Heart left ventricle (tissue), 16 donors: ENCODE measurements at regions of chr9 and their contacts with region 1.

Region 1: GRCh38 chr9:128361986-128362646 is 9.1 kb upstream of the URM1 start:
- DNase-seq: peak; percentile 83 to 89 (median 85)
- ATAC-seq: peak; percentile 81 to 93 (median 90)
- H3K4me3 ChIP-seq: peak overlapping the region in 11 of 12 donors; percentile 18 to 65 (median 50)
- H3K27ac ChIP-seq: peak overlapping the region; percentile 1 to 75 (median 58)
- H3K4me1 ChIP-seq: peaks cover 0 to 29% (median 22%) of the 10 kb centered on the region in 12 donors
- H3K27me3 ChIP-seq: no peaks in the 10 kb centered on the region
- CTCF ChIP-seq: peak; percentile 86 to 98 (median 90)
- POLR2A ChIP-seq: peak in 1 of 2 donors; percentile 29

Region 2: DNA sequence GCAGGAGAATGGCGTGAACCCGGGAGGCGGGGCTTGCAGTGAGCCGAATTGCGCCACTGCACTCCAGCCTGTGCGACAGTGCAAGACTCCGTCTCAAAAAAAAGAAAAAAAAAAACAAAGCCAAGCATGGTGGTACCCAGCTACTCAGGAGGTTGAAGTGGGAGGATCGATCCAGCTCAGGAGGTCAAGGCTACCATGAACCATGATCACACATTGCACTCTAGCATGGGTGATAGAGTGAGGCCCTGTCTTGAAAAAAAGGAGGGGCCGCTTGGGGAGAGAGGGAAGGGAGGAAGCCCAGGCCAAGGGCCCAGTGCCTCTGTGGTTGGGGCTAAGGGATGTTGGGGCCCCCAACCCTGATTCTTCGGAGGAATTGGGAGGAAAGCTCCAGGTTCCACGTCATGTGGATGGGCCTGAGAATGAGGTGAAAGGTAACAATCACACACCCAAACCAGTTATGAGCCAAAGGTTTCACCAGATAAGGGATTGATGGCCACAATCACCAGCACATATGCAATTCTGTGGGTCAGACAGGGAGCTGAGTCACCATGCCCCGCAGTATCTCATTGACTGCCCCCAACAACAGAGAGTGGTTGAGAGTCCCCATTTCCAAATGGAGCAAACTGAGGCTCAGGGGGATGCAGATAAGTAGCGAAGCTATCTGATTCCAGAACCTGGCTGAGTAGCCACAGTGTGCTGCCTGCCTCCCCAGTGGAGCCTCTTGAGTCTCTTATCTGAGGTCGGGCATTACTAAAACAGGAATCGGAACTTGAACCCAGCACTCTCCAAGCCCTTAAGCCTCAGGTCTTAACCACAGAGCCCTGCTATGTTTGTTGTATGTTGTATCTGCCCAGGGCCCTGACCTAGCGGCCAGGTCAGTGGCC is 65.5 kb before region 1 on chr9:
- intact Hi-C with region 1: loop called in 2 of 10 experiments (anchors 2 to 5 kb)
- DNase-seq: no peak
- ATAC-seq: no peak
- H3K4me3 ChIP-seq: no peak overlapping the region
- H3K27ac ChIP-seq: no peak overlapping the region
- H3K4me1 ChIP-seq: peaks cover 0 to 6% (median 0%) of the 10 kb centered on the region in 12 donors
- H3K27me3 ChIP-seq: no peaks in the 10 kb centered on the region
- CTCF ChIP-seq: no peak
- POLR2A ChIP-seq: no peak

Region 3: GRCh38 chr9:128412120-128412790 is 50.1 kb after region 1 on chr9:
- intact Hi-C with region 1: loop called in 9 of 10 experiments (anchors 1 to 5 kb)
- DNase-seq: peak in 2 of 5 donors; percentile 26 to 35
- ATAC-seq: peak in 3 of 4 donors; percentile 28 to 65 (median 49)
- H3K4me3 ChIP-seq: no peak overlapping the region
- H3K27ac ChIP-seq: no peak overlapping the region
- H3K4me1 ChIP-seq: peaks cover 0 to 13% (median 0%) of the 10 kb centered on the region in 12 donors
- H3K27me3 ChIP-seq: peaks cover 0 to 60% (median 15%) of the 10 kb centered on the region in 9 donors
- CTCF ChIP-seq: peak; percentile 33 to 68 (median 57)
- POLR2A ChIP-seq: no peak

Region 4: GRCh38 chr9:128420060-128420650 is 58.0 kb after region 1 on chr9:
- intact Hi-C with region 1: loop called in 2 of 10 experiments (anchors 2 to 5 kb)
- DNase-seq: peak; percentile 74 to 87 (median 79)
- ATAC-seq: peak; percentile 66 to 90 (median 87)
- H3K4me3 ChIP-seq: peak overlapping the region; percentile 56 to 99 (median 93)
- H3K27ac ChIP-seq: peak overlapping the region in 11 of 12 donors; percentile 64 to 87 (median 78)
- H3K4me1 ChIP-seq: peaks cover 0 to 28% (median 16%) of the 10 kb centered on the region in 12 donors
- H3K27me3 ChIP-seq: peaks cover 0 to 32% (median 13%) of the 10 kb centered on the region in 9 donors
- CTCF ChIP-seq: peak; percentile 78 to 98 (median 86)
- POLR2A ChIP-seq: peak in 1 of 2 donors; percentile 11

Region 5: GRCh38 chr9:128504485-128505413 is 142.6 kb after region 1 on chr9 and contains the start of gene GLE1:
- intact Hi-C with region 1: loop called in 1 of 10 experiments (anchors 10 kb)
- DNase-seq: peak; percentile 95 to 99 (median 96)
- ATAC-seq: peak; percentile 99 to 100 (median 100)
- H3K4me3 ChIP-seq: peak within 1 kb of the TSS; percentile 45 to 99 (median 78)
- H3K27ac ChIP-seq: peak within 1 kb of the TSS; percentile 20 to 90 (median 80)
- H3K4me1 ChIP-seq: peaks cover 0 to 24% (median 19%) of the 10 kb centered on the region in 12 donors
- H3K27me3 ChIP-seq: no peaks in the 10 kb centered on the region
- CTCF ChIP-seq: no peak
- POLR2A ChIP-seq: peak in 1 of 2 donors; percentile 80
- total RNA-seq, gene GLE1: 17.2 to 23.5 (median 19.9) TPM

Region 6: DNA sequence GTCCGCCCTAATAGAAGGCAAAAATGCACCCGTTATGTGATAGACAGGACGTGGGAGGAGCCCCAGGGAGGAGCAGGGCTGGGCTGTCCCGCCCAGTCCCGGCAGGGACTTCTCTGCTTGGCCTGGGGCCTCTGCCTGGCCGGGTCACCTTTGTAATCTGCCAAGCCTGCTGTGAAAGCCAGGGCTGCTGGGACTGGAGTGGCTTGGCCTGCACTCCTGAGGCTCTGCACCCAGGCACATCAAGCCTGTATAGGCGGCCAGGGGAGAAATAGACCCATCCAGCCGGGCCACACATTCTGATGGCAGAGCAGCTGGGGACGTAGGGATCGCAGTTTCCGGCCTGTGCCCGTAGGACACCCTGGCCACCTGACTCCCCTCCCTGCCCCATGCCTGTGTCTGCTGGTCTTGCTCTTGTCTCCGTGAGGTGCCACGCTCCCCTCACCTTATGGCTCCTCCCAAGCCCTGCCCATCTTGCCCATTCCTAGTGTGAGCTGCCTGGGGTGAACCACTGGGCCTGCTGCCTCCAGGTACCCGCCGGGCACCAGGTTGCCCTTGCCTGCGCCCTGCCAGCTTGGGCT is 266.4 kb after region 1 on chr9:
- intact Hi-C with region 1: loop called in 1 of 10 experiments (anchors 10 kb)
- DNase-seq: peak; percentile 78 to 90 (median 82)
- ATAC-seq: peak; percentile 90 to 96 (median 94)
- H3K4me3 ChIP-seq: no peak overlapping the region
- H3K27ac ChIP-seq: peak overlapping the region in 11 of 12 donors; percentile 40 to 86 (median 69)
- H3K4me1 ChIP-seq: peaks cover 0 to 36% (median 16%) of the 10 kb centered on the region in 12 donors
- H3K27me3 ChIP-seq: no peaks in the 10 kb centered on the region
- CTCF ChIP-seq: no peak
- POLR2A ChIP-seq: no peak

Region 7: DNA sequence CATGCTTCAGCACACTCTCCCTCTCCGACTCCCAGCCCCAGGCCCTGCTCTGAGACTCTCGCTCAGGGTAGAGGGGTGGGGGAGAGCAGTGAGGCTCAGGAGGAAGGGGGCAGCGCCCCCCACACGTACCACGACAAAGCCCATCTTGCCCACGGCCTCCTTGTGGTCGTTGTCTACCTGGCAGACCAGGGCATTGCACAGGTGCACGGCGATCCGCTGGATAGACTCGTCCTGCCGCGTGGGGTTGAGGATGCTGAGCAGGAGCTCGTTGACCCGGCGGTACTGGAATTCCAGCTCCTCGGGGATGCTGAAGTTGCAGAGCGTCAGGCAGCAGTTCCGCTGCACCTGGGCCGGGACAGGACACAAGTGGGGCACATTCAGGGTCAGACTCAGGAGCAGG is 380.3 kb after region 1 on chr9:
- intact Hi-C with region 1: no loop called
- DNase-seq: no peak
- ATAC-seq: peak in 1 of 4 donors; percentile 14
- H3K4me3 ChIP-seq: no peak overlapping the region
- H3K27ac ChIP-seq: no peak overlapping the region
- H3K4me1 ChIP-seq: no peaks in the 10 kb centered on the region
- H3K27me3 ChIP-seq: no peaks in the 10 kb centered on the region
- CTCF ChIP-seq: no peak
- POLR2A ChIP-seq: no peak

Region 8: DNA sequence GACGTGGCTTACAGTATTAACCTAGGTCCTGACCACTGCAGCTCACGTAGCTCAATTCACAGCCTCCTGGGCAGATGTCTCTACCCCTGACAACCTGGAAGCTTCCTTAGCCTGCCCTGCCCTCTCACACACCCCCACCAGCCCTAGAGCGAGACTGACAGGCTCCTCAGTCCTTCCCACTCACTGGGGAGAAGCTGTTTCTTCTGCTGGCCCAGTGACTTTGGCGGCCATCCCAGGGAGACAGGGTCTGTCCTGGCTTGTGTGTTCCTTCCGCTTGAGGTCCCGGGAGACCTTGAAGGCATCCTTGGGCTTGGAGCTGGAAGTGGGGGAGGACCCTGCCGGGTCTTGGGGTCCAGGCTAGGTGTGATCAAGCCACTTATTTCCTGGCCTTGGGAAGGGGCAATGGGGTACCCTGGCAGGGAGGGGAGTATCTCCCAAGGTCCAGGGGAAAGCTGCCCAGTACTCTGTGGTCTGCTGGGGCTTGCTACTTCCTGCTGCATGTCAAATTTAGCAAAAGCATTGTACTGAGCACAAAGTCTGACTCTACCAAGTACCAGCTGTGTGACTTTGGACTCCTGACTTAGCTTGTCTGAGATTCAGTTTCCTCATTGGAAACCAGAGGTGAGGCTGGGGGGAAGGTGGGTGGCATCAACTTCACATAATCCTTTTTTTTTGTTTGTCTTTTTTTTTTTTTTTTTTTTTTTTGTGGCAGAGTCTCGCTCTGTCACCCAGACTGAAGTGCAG is 676.2 kb after region 1 on chr9:
- intact Hi-C with region 1: no loop called
- DNase-seq: peak; percentile 71 to 82 (median 78)
- ATAC-seq: peak in 1 of 4 donors; percentile 1
- H3K4me3 ChIP-seq: peak overlapping the region in 9 of 12 donors; percentile 75 to 97 (median 91)
- H3K27ac ChIP-seq: peak overlapping the region; percentile 17 to 91 (median 80)
- H3K4me1 ChIP-seq: peaks cover 7 to 42% (median 21%) of the 10 kb centered on the region in 12 donors
- H3K27me3 ChIP-seq: no peaks in the 10 kb centered on the region
- CTCF ChIP-seq: no peak
- POLR2A ChIP-seq: no peak